Mammary epithelial cell (primary cell): ENCODE measurements at regions of chr11 and their contacts with region 1.

Region 1: GRCh38 chr11:3091791-3092602 is 34.8 kb upstream of the CARS1 start:
- DNase-seq: peak; percentile 73
- H3K4me3 ChIP-seq: no peak overlapping the region
- H3K27ac ChIP-seq: no peak overlapping the region
- H3K4me1 ChIP-seq: peaks cover 18% of the 10 kb centered on the region
- H3K27me3 ChIP-seq: no peaks in the 10 kb centered on the region
- CTCF ChIP-seq: peak; percentile 96

Region 2: DNA sequence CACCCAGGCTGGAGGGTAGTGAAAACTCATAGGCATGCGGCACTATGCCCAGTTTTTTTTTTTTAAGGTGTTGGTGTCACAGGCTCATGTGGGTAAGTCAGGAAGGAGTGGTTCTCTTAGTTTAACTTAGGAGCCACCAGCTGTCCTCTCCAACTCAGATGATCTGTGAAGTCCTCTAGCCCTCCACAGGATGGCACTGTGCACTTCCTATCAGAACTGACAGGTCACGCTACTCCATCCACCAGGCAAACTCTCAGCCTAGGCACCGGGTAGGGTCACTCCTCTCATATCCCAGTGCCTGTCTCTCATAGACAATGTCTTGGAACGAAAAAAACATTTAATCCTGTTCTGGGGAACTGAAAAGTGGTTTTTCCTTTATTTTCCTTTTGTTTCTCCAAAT is 116.4 kb before region 1 on chr11:
- CTCF ChIA-PET with region 1: no interaction called
- dilution Hi-C with region 1: no loop called
- in situ Hi-C with region 1: no loop called
- intact Hi-C with region 1: loop called (anchors 1 kb)
- DNase-seq: no peak
- H3K4me3 ChIP-seq: no peak overlapping the region
- H3K27ac ChIP-seq: no peak overlapping the region
- H3K4me1 ChIP-seq: peaks cover 6% of the 10 kb centered on the region
- H3K27me3 ChIP-seq: no peaks in the 10 kb centered on the region
- CTCF ChIP-seq: peak; percentile 49 to 64

Region 3: GRCh38 chr11:3037040-3037944 is 54.7 kb before region 1 on chr11:
- CTCF ChIA-PET with region 1: interaction called, 4 read pairs
- dilution Hi-C with region 1: loop called (anchors 5 kb)
- in situ Hi-C with region 1: loop called in 1 of 2 experiments (anchors 10 kb)
- intact Hi-C with region 1: loop called (anchors 1 kb)
- DNase-seq: peak; percentile 50
- H3K4me3 ChIP-seq: no peak overlapping the region
- H3K27ac ChIP-seq: no peak overlapping the region
- H3K4me1 ChIP-seq: peaks cover 6% of the 10 kb centered on the region
- H3K27me3 ChIP-seq: no peaks in the 10 kb centered on the region
- CTCF ChIP-seq: peak; percentile 67 to 79

Region 4: GRCh38 chr11:3135481-3136440 is 43.8 kb after region 1 on chr11:
- CTCF ChIA-PET with region 1: no interaction called
- dilution Hi-C with region 1: loop called (anchors 5 kb)
- in situ Hi-C with region 1: no loop called
- intact Hi-C with region 1: no loop called
- DNase-seq: no peak
- H3K4me3 ChIP-seq: no peak overlapping the region
- H3K27ac ChIP-seq: no peak overlapping the region
- H3K4me1 ChIP-seq: peaks cover 4% of the 10 kb centered on the region
- H3K27me3 ChIP-seq: no peaks in the 10 kb centered on the region
- CTCF ChIP-seq: no peak